Activated CD4-positive, alpha-beta T cell treated with anti-CD3 and anti-CD28 coated beads for 36 hours (primary cell): ENCODE measurements at regions of chr19 and their contacts with region 1.

Region 1: DNA sequence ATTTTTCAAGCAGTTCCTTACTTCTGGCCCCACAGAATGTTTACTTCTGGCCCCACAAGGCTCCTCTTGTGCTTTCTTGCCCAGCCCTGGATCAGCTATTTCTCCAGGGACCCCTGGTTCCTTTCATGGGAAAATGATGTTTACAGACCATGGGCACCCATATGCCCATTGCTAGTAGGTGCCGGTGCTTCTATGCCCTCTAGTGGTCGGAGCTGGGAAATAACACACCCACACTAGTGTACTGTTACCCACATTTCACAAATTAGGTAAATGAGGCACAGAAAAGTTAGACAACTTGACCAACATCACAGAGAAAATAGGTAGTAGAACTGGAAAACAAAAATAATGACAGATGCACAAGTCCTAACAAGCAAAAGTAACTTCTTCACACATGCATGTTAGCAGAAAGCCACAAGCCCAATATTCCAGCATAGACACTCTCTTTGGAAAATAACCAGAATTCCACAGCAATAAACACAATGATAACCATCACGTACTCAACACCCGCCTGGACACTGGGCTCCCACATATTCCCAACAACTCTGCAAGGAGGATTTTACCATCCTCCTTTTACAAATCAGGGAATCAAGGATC is 1.3 kb upstream of the CEACAM6 start:
- DNase-seq: peak; percentile 83
- ATAC-seq: peak; percentile 90
- H3K4me3 Mint-ChIP-seq: no peak overlapping the region
- H3K27ac Mint-ChIP-seq: no peak overlapping the region
- H3K4me1 Mint-ChIP-seq: peaks cover 7% of the 10 kb centered on the region
- H3K27me3 Mint-ChIP-seq: peaks cover 32% of the 10 kb centered on the region

Region 2: GRCh38 chr19:41641879-41642485 is 112.1 kb before region 1 on chr19:
- CTCF ChIA-PET with region 1: interaction called, 17 read pairs
- POLR2A ChIA-PET with region 1: no interaction called
- intact Hi-C with region 1: loop called (anchors 5 kb)
- DNase-seq: peak; percentile 82
- ATAC-seq: peak; percentile 76
- H3K4me3 Mint-ChIP-seq: no peak overlapping the region
- H3K27ac Mint-ChIP-seq: no peak overlapping the region
- H3K4me1 Mint-ChIP-seq: peaks cover 19% of the 10 kb centered on the region
- H3K27me3 Mint-ChIP-seq: peaks cover 7% of the 10 kb centered on the region

Region 3: DNA sequence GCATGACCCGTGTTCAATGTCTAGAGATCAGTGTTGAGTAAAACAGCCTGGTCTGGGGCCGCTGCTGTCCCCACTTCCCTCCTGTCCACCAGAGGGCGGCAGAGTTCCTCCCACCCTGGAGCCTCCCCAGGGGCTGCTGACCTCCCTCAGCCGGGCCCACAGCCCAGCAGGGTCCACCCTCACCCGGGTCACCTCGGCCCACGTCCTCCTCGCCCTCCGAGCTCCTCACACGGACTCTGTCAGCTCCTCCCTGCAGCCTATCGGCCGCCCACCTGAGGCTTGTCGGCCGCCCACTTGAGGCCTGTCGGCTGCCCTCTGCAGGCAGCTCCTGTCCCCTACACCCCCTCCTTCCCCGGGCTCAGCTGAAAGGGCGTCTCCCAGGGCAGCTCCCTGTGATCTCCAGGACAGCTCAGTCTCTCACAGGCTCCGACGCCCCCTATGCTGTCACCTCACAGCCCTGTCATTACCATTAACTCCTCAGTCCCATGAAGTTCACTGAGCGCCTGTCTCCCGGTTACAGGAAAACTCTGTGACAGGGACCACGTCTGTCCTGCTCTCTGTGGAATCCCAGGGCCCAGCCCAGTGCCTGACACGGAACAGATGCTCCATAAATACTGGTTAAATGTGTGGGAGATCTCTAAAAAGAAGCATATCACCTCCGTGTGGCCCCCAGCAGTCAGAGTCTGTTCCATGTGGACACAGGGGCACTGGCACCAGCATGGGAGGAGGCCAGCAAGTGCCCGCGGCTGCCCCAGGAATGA is 47.1 kb before region 1 on chr19:
- CTCF ChIA-PET with region 1: interaction called, 13 read pairs
- POLR2A ChIA-PET with region 1: no interaction called
- intact Hi-C with region 1: no loop called
- DNase-seq: peak; percentile 84
- ATAC-seq: peak; percentile 96
- H3K4me3 Mint-ChIP-seq: peak overlapping the region; percentile 28
- H3K27ac Mint-ChIP-seq: no peak overlapping the region
- H3K4me1 Mint-ChIP-seq: peaks cover 3% of the 10 kb centered on the region
- H3K27me3 Mint-ChIP-seq: peaks cover 26% of the 10 kb centered on the region

Region 4: DNA sequence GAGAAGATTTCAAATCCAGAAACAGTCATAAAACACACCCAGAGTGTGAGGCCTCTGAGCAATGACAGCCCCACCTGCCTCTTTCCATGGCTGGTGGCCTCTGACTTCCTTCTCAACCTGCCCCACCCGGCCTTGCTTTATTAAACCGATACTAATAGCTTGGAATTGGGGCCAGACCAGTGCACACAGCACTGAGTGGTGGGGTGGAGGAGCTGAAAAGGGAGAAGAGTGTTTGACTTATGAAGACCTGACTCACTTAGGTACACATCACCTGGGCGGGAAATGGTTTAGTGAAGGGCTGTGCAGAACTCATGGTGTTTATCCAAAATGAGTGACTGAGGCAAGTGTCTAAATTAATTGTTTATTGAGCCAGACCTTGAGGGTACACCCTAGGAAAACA is 19.4 kb before region 1 on chr19:
- CTCF ChIA-PET with region 1: interaction called, 30 read pairs
- POLR2A ChIA-PET with region 1: no interaction called
- intact Hi-C with region 1: no loop called
- DNase-seq: no peak
- ATAC-seq: no peak
- H3K4me3 Mint-ChIP-seq: no peak overlapping the region
- H3K27ac Mint-ChIP-seq: no peak overlapping the region
- H3K4me1 Mint-ChIP-seq: peaks cover 9% of the 10 kb centered on the region
- H3K27me3 Mint-ChIP-seq: peaks cover 53% of the 10 kb centered on the region

Region 5: DNA sequence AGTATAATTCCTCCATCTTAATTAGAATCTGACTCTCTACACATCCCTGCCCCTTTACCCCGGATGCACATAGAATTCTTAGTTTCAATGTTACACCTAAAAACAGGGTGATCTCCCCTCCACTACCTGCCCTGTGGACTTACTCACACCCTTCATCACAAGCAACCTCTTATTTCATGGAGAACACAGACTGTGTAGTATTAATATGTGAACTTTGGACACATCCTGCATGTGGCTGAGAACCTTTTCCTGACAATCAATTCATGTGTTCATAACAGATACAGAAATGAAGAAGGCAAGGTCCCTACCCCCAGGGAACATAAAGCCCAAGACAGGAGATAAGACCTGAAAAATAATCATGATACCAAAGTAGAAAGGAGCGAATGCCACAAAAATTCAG is 13.1 kb after region 1 on chr19:
- CTCF ChIA-PET with region 1: interaction called, 98 read pairs
- POLR2A ChIA-PET with region 1: interaction called, 6 read pairs
- intact Hi-C with region 1: no loop called
- DNase-seq: no peak
- ATAC-seq: no peak
- H3K4me3 Mint-ChIP-seq: no peak overlapping the region
- H3K27ac Mint-ChIP-seq: no peak overlapping the region
- H3K4me1 Mint-ChIP-seq: peaks cover 1% of the 10 kb centered on the region
- H3K27me3 Mint-ChIP-seq: peaks cover 43% of the 10 kb centered on the region

Region 6: DNA sequence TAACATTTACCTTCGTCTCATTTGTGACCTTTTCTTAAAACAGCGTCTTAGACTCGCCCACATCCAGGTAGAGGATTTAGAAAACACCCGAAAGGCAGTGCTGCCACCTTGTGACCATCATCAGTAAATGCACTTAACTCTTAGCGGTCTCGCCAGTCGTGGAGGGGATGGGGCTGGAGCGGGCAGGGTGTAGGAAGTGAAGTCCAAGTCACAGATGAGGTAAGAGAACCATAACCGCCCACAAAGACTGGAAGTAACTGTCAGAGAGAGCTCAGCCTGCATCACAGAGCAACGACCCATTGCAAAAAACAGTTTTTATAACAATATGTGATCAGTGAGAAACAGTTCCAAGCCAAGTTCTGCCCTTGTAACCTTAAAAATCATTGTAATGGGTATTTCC is 31.6 kb after region 1 on chr19:
- CTCF ChIA-PET with region 1: interaction called, 115 read pairs
- POLR2A ChIA-PET with region 1: no interaction called
- intact Hi-C with region 1: loop called (anchors 1 kb)
- DNase-seq: peak; percentile 85
- ATAC-seq: peak; percentile 95
- H3K4me3 Mint-ChIP-seq: no peak overlapping the region
- H3K27ac Mint-ChIP-seq: no peak overlapping the region
- H3K4me1 Mint-ChIP-seq: peaks cover 17% of the 10 kb centered on the region
- H3K27me3 Mint-ChIP-seq: peaks cover 51% of the 10 kb centered on the region

Region 7: GRCh38 chr19:41821003-41821735 is 67.1 kb after region 1 on chr19:
- CTCF ChIA-PET with region 1: interaction called, 31 read pairs
- POLR2A ChIA-PET with region 1: no interaction called
- intact Hi-C with region 1: loop called in 1 of 2 experiments (anchors 1 kb)
- DNase-seq: peak; percentile 67
- ATAC-seq: peak; percentile 90
- H3K4me3 Mint-ChIP-seq: no peak overlapping the region
- H3K27ac Mint-ChIP-seq: no peak overlapping the region
- H3K4me1 Mint-ChIP-seq: no peaks in the 10 kb centered on the region
- H3K27me3 Mint-ChIP-seq: peaks cover 10% of the 10 kb centered on the region

Region 8: DNA sequence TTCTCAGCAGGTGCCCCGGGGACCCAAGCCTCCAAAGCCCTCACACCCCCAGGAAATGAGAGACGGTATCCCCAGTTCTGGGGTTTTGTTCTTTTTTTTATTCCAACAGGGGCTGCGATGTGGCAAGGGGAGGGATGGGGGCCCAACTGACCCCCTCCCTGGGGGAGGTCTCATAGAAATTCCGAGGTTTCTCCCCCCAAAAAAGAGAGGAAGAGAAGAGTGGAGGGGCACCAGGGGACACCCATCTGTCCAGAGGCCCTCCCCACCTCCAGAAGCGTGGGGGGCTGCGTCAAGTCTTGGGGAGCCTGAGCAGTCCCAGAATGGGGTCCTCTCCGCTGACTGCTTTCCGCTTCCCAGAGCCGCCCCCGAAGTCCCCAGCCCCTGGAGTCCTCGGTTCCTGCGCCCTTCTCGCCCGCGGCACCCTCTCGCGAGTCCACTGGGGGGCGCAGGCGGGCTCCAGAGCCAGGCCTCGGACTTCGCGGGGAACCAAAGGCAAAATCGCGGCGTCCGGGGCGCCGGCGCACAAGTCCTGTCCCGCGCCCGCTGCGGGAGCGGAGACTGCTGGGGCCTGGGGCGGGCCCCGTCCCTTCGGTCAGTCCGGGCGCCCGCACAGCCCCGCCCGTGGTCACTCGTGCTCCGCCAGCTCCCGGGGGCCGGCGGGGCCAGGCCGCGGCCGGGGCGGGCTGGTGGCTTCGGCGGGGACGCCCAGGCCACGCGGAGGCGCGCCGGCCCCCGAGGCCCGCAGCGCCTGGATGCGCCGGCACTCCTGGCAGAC is 244.4 kb after region 1 on chr19:
- CTCF ChIA-PET with region 1: no interaction called
- POLR2A ChIA-PET with region 1: no interaction called
- intact Hi-C with region 1: no loop called
- DNase-seq: peak; percentile 79
- ATAC-seq: no peak
- H3K4me3 Mint-ChIP-seq: no peak overlapping the region
- H3K27ac Mint-ChIP-seq: no peak overlapping the region
- H3K4me1 Mint-ChIP-seq: peaks cover 27% of the 10 kb centered on the region
- H3K27me3 Mint-ChIP-seq: peaks cover 64% of the 10 kb centered on the region

Region 9: GRCh38 chr19:42343344-42344110 is 589.5 kb after region 1 on chr19:
- CTCF ChIA-PET with region 1: no interaction called
- POLR2A ChIA-PET with region 1: no interaction called
- intact Hi-C with region 1: no loop called
- DNase-seq: no peak
- ATAC-seq: no peak
- H3K4me3 Mint-ChIP-seq: no peak overlapping the region
- H3K27ac Mint-ChIP-seq: no peak overlapping the region
- H3K4me1 Mint-ChIP-seq: no peaks in the 10 kb centered on the region
- H3K27me3 Mint-ChIP-seq: no peaks in the 10 kb centered on the region